ENCODE measurements at regions of chr12 and their contacts with region 1.

Region 1: GRCh38 chr12:96061864-96062453 is 26.6 kb upstream of the LTA4H start:
- DNase-seq: peak; percentile 90
- H3K4me3 ChIP-seq: no peak overlapping the region
- H3K27ac ChIP-seq: no peak overlapping the region
- H3K4me1 ChIP-seq: peaks cover 3% of the 10 kb centered on the region
- H3K27me3 ChIP-seq: no peaks in the 10 kb centered on the region
- CTCF ChIP-seq: peak; percentile 77 to 80
- POLR2A ChIP-seq: no peak

Region 2: GRCh38 chr12:95908573-95908972 is 153.4 kb before region 1 on chr12:
- CTCF ChIA-PET with region 1: no interaction called
- POLR2A ChIA-PET with region 1: no interaction called
- dilution Hi-C with region 1: no loop called
- intact Hi-C with region 1: no loop called
- DNase-seq: peak; percentile 40
- H3K4me3 ChIP-seq: no peak overlapping the region
- H3K27ac ChIP-seq: no peak overlapping the region
- H3K4me1 ChIP-seq: no peaks in the 10 kb centered on the region
- H3K27me3 ChIP-seq: peaks cover 3 to 6% of the 10 kb centered on the region in 2 experiments
- CTCF ChIP-seq: no peak
- POLR2A ChIP-seq: no peak

Region 3: GRCh38 chr12:96084624-96085023 is 22.7 kb after region 1 on chr12:
- CTCF ChIA-PET with region 1: no interaction called
- POLR2A ChIA-PET with region 1: no interaction called
- dilution Hi-C with region 1: no loop called
- intact Hi-C with region 1: no loop called
- DNase-seq: no peak
- H3K4me3 ChIP-seq: no peak overlapping the region
- H3K27ac ChIP-seq: no peak overlapping the region
- H3K4me1 ChIP-seq: peaks cover 18% of the 10 kb centered on the region
- H3K27me3 ChIP-seq: no peaks in the 10 kb centered on the region
- CTCF ChIP-seq: no peak
- POLR2A ChIP-seq: no peak

Region 4: GRCh38 chr12:96132819-96133218 is 70.9 kb after region 1 on chr12:
- CTCF ChIA-PET with region 1: interaction called, 13 read pairs
- POLR2A ChIA-PET with region 1: no interaction called
- dilution Hi-C with region 1: no loop called
- intact Hi-C with region 1: loop called (anchors 1 kb)
- DNase-seq: peak; percentile 48
- H3K4me3 ChIP-seq: no peak overlapping the region
- H3K27ac ChIP-seq: no peak overlapping the region
- H3K4me1 ChIP-seq: peaks cover 29% of the 10 kb centered on the region
- H3K27me3 ChIP-seq: no peaks in the 10 kb centered on the region
- CTCF ChIP-seq: peak; percentile 15 to 42
- POLR2A ChIP-seq: no peak

Region 5: DNA sequence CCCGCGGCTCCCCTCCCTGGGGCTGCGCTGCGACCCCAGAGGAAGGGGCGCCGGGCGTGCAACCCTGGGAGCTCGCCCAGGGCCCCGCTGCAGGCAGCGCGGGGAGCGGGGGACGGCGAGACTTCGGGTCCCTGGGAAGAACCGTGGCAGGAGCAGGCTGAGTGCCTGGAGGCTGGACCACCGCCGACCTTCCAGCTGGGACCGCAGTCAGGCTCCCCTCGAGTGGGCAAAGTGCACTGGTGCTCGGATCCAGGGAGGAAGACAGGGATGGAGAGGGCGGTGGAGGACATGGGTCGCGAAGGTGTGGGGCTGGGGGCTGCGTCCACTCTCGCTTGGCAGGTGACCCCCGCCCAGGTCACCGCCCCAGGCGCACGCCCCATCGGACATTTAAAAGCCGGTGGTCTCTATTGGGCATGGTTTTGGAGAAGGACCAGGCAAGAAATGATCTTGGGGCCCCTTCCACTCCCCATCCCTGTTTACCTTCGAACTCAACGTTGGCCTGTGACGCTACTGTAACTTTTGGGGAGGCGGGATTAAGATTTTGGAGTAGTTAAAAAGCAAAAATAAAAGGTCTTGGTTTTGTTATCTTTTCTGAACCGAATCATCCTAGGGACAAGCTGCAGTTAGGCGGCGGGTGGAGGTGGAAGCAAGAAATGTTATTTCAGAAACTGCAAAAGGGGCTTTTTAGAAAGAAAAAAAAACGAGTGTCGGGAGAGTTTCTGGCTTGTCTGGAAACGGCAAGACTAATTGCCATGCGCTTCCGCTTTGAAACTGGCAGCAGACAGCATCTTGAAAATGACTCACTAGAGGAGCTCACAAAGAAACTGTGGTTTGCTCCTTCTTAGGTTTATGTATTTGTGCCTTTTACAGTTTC is 133.2 kb after region 1 on chr12:
- CTCF ChIA-PET with region 1: interaction called, 5 read pairs
- POLR2A ChIA-PET with region 1: interaction called, 3 read pairs
- dilution Hi-C with region 1: no loop called
- intact Hi-C with region 1: loop called (anchors 1 kb)
- DNase-seq: peak; percentile 83
- H3K4me3 ChIP-seq: peak overlapping the region; percentile 65 to 90 (median 68)
- H3K27ac ChIP-seq: peak overlapping the region; percentile 100
- H3K4me1 ChIP-seq: peaks cover 40% of the 10 kb centered on the region
- H3K27me3 ChIP-seq: no peaks in the 10 kb centered on the region
- CTCF ChIP-seq: no peak
- POLR2A ChIP-seq: peak; percentile 68

Region 6: DNA sequence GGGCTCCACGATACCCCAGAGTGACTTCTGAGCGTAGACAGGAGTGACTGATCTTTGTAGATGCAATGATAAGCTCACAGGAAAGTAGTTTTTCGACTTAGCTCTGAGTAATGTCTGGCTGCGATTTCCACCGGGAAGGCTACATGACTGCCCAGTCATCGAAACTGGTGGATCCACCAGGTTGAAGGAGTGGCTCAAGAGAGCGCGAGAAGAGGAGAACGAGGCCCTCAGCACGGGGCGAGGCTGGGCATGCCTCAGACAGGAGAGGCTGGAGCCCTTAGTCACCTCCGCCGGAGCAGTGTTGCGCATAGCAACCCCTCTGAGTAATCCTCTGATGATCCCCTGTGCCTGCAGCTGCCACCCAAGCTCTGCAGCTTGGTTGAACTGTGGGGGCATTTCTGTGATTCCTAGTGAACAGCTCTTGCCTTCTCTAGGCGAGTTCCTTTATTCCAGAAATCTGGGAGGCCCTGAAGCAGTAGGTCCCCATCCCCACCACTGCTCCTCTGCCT is 157.8 kb after region 1 on chr12:
- CTCF ChIA-PET with region 1: interaction called, 79 read pairs
- POLR2A ChIA-PET with region 1: interaction called, 3 read pairs
- dilution Hi-C with region 1: no loop called
- intact Hi-C with region 1: loop called (anchors 1 kb)
- DNase-seq: peak; percentile 96
- H3K4me3 ChIP-seq: no peak overlapping the region
- H3K27ac ChIP-seq: peak overlapping the region; percentile 90
- H3K4me1 ChIP-seq: peaks cover 93% of the 10 kb centered on the region
- H3K27me3 ChIP-seq: no peaks in the 10 kb centered on the region
- CTCF ChIP-seq: no peak
- POLR2A ChIP-seq: peak; percentile 63

Region 7: DNA sequence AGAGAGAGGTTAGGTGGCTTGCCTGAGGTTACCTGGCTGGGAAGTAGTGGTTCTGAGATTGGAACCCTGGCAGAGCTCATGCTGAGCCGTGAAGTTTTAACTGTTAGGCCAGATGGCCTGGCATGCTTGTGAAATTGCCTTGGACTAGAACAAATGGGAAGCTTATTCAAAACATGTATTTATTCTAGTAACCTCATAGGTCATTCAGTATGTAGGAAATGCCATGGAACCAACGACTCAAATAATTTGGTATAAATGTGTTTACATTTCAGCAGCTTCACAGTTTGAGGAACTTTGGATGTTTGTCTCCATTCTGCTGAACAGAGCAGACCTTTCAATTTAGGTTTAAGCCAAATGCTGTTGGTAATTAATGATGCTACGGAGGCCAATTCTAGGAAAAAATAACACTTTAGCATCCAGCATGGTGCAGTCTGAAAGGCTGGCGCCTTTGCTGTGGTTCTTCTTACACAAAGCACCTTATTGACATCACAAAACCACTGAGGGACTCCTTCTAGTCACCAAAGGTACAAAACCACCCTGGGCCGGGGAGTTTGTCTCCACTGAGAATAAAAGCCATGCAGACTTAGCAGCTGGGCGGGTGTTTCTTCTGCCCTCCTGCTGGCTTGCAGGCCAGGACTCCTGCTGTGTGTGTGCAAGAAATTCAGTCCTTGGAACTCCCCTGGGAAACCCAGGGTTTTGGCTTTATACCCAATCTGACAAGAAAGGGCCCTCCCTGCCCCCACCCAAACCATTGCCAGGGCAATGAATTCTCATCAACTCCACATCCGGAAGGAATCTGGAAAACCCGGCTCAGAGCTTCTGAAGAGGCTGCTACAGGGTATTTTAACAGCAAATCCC is 196.4 kb after region 1 on chr12:
- CTCF ChIA-PET with region 1: interaction called, 3 read pairs
- POLR2A ChIA-PET with region 1: no interaction called
- dilution Hi-C with region 1: no loop called
- intact Hi-C with region 1: loop called (anchors 1 kb)
- DNase-seq: peak; percentile 70
- H3K4me3 ChIP-seq: no peak overlapping the region
- H3K27ac ChIP-seq: peak overlapping the region; percentile 41
- H3K4me1 ChIP-seq: peaks cover 80% of the 10 kb centered on the region
- H3K27me3 ChIP-seq: no peaks in the 10 kb centered on the region
- CTCF ChIP-seq: no peak
- POLR2A ChIP-seq: no peak

Region 8: GRCh38 chr12:96399919-96400797 is 338.2 kb after region 1 on chr12 and contains the start of gene CDK17:
- CTCF ChIA-PET with region 1: no interaction called
- POLR2A ChIA-PET with region 1: no interaction called
- dilution Hi-C with region 1: no loop called
- intact Hi-C with region 1: loop called (anchors 2 kb)
- DNase-seq: peak; percentile 83
- H3K4me3 ChIP-seq: peak within 1 kb of the TSS; percentile 77 to 98 (median 80)
- H3K27ac ChIP-seq: peak within 1 kb of the TSS; percentile 99
- H3K4me1 ChIP-seq: peaks cover 42% of the 10 kb centered on the region
- H3K27me3 ChIP-seq: no peaks in the 10 kb centered on the region
- CTCF ChIP-seq: peak in 1 of 2 donors; percentile 42
- POLR2A ChIP-seq: peak; percentile 64
- total RNA-seq, gene CDK17: 176 and 193 TPM in 2 replicates

Region 9: GRCh38 chr12:96985480-96986362 is 923.8 kb after region 1 on chr12:
- CTCF ChIA-PET with region 1: no interaction called
- POLR2A ChIA-PET with region 1: no interaction called
- dilution Hi-C with region 1: no loop called
- intact Hi-C with region 1: loop called (anchors 5 kb)
- DNase-seq: peak; percentile 23
- H3K4me3 ChIP-seq: peak overlapping the region; percentile 5 to 41 (median 39)
- H3K27ac ChIP-seq: no peak overlapping the region
- H3K4me1 ChIP-seq: peaks cover 7% of the 10 kb centered on the region
- H3K27me3 ChIP-seq: peaks cover 14 to 33% of the 10 kb centered on the region in 2 experiments
- CTCF ChIP-seq: peak; percentile 80 to 90
- POLR2A ChIP-seq: no peak